Endothelial cell of umbilical vein (primary cell): ENCODE measurements at regions of chr2 and their contacts with region 1.

Region 1: GRCh38 chr2:20617892-20618467 is 32.9 kb downstream of the HS1BP3 start:
- DNase-seq: peak; percentile 98
- H3K4me3 ChIP-seq: no peak overlapping the region
- H3K27ac ChIP-seq: peak overlapping the region; percentile 77
- H3K4me1 ChIP-seq: peaks cover 34% of the 10 kb centered on the region
- H3K27me3 ChIP-seq: no peaks in the 10 kb centered on the region
- CTCF ChIP-seq: peak; percentile 34 to 67
- POLR2A ChIP-seq: no peak

Region 2: GRCh38 chr2:20573620-20574422 is 44.2 kb before region 1 on chr2:
- CTCF ChIA-PET with region 1: interaction called, 17 read pairs
- POLR2A ChIA-PET with region 1: interaction called, 5 read pairs
- dilution Hi-C with region 1: no loop called
- intact Hi-C with region 1: loop called (anchors 1 kb)
- DNase-seq: peak; percentile 98
- H3K4me3 ChIP-seq: no peak overlapping the region
- H3K27ac ChIP-seq: peak overlapping the region; percentile 100
- H3K4me1 ChIP-seq: peaks cover 98% of the 10 kb centered on the region
- H3K27me3 ChIP-seq: no peaks in the 10 kb centered on the region
- CTCF ChIP-seq: no peak
- POLR2A ChIP-seq: no peak

Region 3: DNA sequence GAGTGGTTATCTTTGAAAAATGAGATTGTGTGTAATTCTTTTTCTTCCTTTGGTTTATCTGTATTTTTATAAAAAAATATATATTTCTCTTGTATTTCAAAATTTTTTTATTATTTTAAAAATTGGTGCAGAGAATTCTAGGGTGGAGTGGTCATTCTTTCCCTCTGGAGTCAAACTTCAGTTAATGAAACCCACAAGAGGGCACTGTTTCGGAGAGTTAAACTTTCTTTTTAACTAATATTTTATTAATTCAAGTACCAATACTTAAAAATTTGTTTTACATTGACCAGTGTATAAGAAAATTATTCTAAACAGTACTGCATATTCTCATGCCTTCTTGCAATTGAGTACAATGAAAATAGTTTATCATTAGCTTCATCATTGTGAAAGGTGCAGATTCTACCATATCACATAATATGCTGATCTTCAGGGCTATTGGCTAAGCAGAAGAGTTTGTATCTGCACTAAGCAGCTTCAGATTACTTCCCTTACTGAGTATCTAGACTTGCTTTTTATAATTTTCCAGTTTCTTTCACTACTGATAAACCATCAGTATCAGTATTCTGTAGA is 17.1 kb before region 1 on chr2:
- CTCF ChIA-PET with region 1: interaction called, 15 read pairs
- POLR2A ChIA-PET with region 1: interaction called, 7 read pairs
- dilution Hi-C with region 1: no loop called
- intact Hi-C with region 1: loop called (anchors 1 kb)
- DNase-seq: peak; percentile 71
- H3K4me3 ChIP-seq: no peak overlapping the region
- H3K27ac ChIP-seq: peak overlapping the region; percentile 35
- H3K4me1 ChIP-seq: peaks cover 44% of the 10 kb centered on the region
- H3K27me3 ChIP-seq: no peaks in the 10 kb centered on the region
- CTCF ChIP-seq: peak in 1 of 2 donors; percentile 16
- POLR2A ChIP-seq: no peak